CD8-positive, alpha-beta T cell (primary cell): ENCODE measurements at regions of chr2 and their contacts with region 1.

Region 1: DNA sequence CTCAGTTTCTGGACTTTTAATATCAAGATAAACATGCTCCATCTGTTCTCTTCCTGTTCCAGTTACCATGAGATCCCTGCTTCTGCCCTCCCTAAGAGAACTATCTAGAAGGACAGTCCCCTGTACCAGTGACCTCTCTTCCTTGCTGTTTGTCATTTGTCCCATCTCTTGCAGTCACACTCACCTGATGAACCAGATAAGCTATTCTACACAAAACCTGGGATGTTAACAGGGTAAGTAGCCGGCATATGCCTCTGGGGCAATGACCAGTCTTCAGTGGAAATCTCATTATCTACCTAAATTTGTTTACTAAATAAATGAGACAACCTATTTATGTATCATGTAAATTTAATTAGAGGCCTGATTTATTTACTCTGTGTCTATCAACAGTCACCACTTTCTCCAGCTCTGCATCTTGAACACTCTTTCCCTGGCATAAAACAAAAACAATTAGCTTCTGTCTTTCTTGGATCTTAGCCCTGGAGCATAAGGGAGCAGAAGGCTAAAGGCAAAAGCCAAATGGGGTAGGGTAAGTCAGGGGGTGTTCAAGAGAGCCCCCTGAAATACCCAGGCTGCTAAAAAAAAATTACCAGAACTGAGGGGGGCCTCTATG is 337.7 kb downstream of the ALK start:
- DNase-seq: no peak
- ATAC-seq: no peak
- H3K4me3 ChIP-seq: no peak overlapping the region
- H3K4me3 Mint-ChIP-seq: no peak overlapping the region
- H3K27ac ChIP-seq: no peak overlapping the region
- H3K27ac Mint-ChIP-seq: no peak overlapping the region
- H3K4me1 ChIP-seq: no peaks in the 10 kb centered on the region
- H3K4me1 Mint-ChIP-seq: no peaks in the 10 kb centered on the region
- H3K27me3 ChIP-seq: no peaks in the 10 kb centered on the region
- H3K27me3 Mint-ChIP-seq: peaks cover 2% of the 10 kb centered on the region
- CTCF ChIP-seq: no peak

Region 2: DNA sequence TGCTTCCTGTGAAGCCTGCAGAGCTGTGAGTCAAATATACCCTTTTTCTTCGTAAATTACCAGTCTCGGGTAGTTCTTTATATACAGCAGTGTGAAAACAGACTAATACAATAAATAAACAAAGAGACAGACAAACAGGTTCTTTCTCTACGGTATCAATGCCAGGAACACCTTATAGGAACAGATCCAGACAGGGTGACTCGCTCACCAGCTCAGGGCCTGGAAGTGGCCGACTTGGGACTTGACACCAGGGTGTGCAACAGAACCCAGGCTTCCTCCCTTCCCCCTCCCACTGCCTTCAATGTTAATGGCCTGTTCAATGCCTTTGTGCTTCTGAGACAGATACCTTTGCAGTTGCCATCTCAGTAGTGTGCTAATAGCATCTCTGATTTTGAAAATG is 28.2 kb after region 1 on chr2:
- CTCF ChIA-PET with region 1: no interaction called
- POLR2A ChIA-PET with region 1: no interaction called
- intact Hi-C with region 1: loop called in 1 of 2 experiments (anchors 2 kb)
- DNase-seq: no peak
- ATAC-seq: no peak
- H3K4me3 ChIP-seq: no peak overlapping the region
- H3K4me3 Mint-ChIP-seq: no peak overlapping the region
- H3K27ac ChIP-seq: no peak overlapping the region
- H3K27ac Mint-ChIP-seq: no peak overlapping the region
- H3K4me1 ChIP-seq: no peaks in the 10 kb centered on the region
- H3K4me1 Mint-ChIP-seq: no peaks in the 10 kb centered on the region
- H3K27me3 ChIP-seq: no peaks in the 10 kb centered on the region
- H3K27me3 Mint-ChIP-seq: peaks cover 25% of the 10 kb centered on the region
- CTCF ChIP-seq: no peak